CD4-positive, alpha-beta T cell (primary cell): ENCODE measurements at regions of chr11 and their contacts with region 1.

Region 1: DNA sequence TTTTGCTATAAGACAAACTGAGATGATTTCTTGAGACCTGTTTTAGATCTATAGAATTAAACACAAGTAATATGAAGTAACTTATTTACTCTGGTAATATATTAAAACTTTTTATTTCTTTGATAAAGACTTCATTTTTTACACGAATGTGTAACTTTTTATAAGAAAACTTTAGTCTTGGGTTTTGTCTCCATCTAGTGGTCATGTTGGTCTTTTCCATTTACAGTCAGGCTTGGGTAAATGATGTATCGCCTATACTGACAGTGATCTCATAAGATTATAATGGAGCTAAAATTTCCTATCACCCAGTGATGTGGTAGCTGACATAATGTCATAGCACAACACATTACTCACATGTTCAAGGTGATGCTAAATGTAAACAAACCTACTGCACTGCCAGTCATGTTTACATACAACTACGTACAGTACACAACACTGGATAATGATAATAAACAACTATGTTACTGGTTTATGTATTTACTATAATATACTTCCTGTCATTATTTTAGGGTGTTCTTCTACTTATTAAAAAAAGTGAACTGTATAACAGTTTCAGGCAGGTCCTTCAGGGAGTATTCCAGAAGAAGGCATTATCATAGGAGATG is 7.5 kb upstream of the C11orf97 start:
- DNase-seq: peak in 3 of 14 experiments; percentile 58 to 75 (median 72)
- ATAC-seq: peak; percentile 43
- H3K4me3 ChIP-seq: no peak overlapping the region
- H3K4me3 Mint-ChIP-seq: no peak overlapping the region
- H3K27ac ChIP-seq: no peak overlapping the region
- H3K27ac Mint-ChIP-seq: no peak overlapping the region
- H3K4me1 ChIP-seq: no peaks in the 10 kb centered on the region
- H3K4me1 Mint-ChIP-seq: no peaks in the 10 kb centered on the region
- H3K27me3 ChIP-seq: no peaks in the 10 kb centered on the region
- H3K27me3 Mint-ChIP-seq: peaks cover 11% of the 10 kb centered on the region
- CTCF ChIP-seq: peak; percentile 85

Region 2: GRCh38 chr11:92941676-92942571 is 1562.9 kb before region 1 on chr11:
- CTCF ChIA-PET with region 1: no interaction called
- POLR2A ChIA-PET with region 1: no interaction called
- intact Hi-C with region 1: loop called (anchors 10 kb)
- DNase-seq: peak in 3 of 14 experiments; percentile 17 to 45 (median 21)
- ATAC-seq: no peak
- H3K4me3 ChIP-seq: no peak overlapping the region
- H3K4me3 Mint-ChIP-seq: no peak overlapping the region
- H3K27ac ChIP-seq: no peak overlapping the region
- H3K27ac Mint-ChIP-seq: no peak overlapping the region
- H3K4me1 ChIP-seq: no peaks in the 10 kb centered on the region
- H3K4me1 Mint-ChIP-seq: no peaks in the 10 kb centered on the region
- H3K27me3 ChIP-seq: peaks cover 3% of the 10 kb centered on the region in 2 experiments
- H3K27me3 Mint-ChIP-seq: peaks cover 29% of the 10 kb centered on the region
- CTCF ChIP-seq: peak; percentile 53

Region 3: GRCh38 chr11:93234602-93235207 is 1270.1 kb before region 1 on chr11:
- CTCF ChIA-PET with region 1: no interaction called
- POLR2A ChIA-PET with region 1: no interaction called
- intact Hi-C with region 1: loop called (anchors 2 to 5 kb)
- DNase-seq: peak; percentile 44 to 79 (median 60)
- ATAC-seq: peak; percentile 100
- H3K4me3 ChIP-seq: no peak overlapping the region
- H3K4me3 Mint-ChIP-seq: no peak overlapping the region
- H3K27ac ChIP-seq: no peak overlapping the region
- H3K27ac Mint-ChIP-seq: no peak overlapping the region
- H3K4me1 ChIP-seq: no peaks in the 10 kb centered on the region
- H3K4me1 Mint-ChIP-seq: no peaks in the 10 kb centered on the region
- H3K27me3 ChIP-seq: peaks cover 0 to 16% of the 10 kb centered on the region in 2 experiments
- H3K27me3 Mint-ChIP-seq: peaks cover 41% of the 10 kb centered on the region
- CTCF ChIP-seq: peak; percentile 80

Region 4: GRCh38 chr11:93895106-93895862 is 609.5 kb before region 1 on chr11:
- CTCF ChIA-PET with region 1: interaction called, 4 read pairs
- POLR2A ChIA-PET with region 1: no interaction called
- intact Hi-C with region 1: loop called in 1 of 2 experiments (anchors 1 kb)
- DNase-seq: peak in 5 of 14 experiments; percentile 7 to 53 (median 35)
- ATAC-seq: peak; percentile 49
- H3K4me3 ChIP-seq: no peak overlapping the region
- H3K4me3 Mint-ChIP-seq: no peak overlapping the region
- H3K27ac ChIP-seq: no peak overlapping the region
- H3K27ac Mint-ChIP-seq: no peak overlapping the region
- H3K4me1 ChIP-seq: no peaks in the 10 kb centered on the region
- H3K4me1 Mint-ChIP-seq: no peaks in the 10 kb centered on the region
- H3K27me3 ChIP-seq: peaks cover 11 to 22% of the 10 kb centered on the region in 2 experiments
- H3K27me3 Mint-ChIP-seq: peaks cover 68% of the 10 kb centered on the region
- CTCF ChIP-seq: peak; percentile 48

Region 5: GRCh38 chr11:94171693-94172440 is 332.9 kb before region 1 on chr11:
- CTCF ChIA-PET with region 1: no interaction called
- POLR2A ChIA-PET with region 1: no interaction called
- intact Hi-C with region 1: loop called in 1 of 2 experiments (anchors 5 kb)
- DNase-seq: peak in 7 of 14 experiments; percentile 6 to 53 (median 30)
- ATAC-seq: no peak
- H3K4me3 ChIP-seq: no peak overlapping the region
- H3K4me3 Mint-ChIP-seq: no peak overlapping the region
- H3K27ac ChIP-seq: no peak overlapping the region
- H3K27ac Mint-ChIP-seq: no peak overlapping the region
- H3K4me1 ChIP-seq: no peaks in the 10 kb centered on the region
- H3K4me1 Mint-ChIP-seq: peaks cover 20% of the 10 kb centered on the region
- H3K27me3 ChIP-seq: no peaks in the 10 kb centered on the region
- H3K27me3 Mint-ChIP-seq: no peaks in the 10 kb centered on the region
- CTCF ChIP-seq: peak; percentile 35

Region 6: DNA sequence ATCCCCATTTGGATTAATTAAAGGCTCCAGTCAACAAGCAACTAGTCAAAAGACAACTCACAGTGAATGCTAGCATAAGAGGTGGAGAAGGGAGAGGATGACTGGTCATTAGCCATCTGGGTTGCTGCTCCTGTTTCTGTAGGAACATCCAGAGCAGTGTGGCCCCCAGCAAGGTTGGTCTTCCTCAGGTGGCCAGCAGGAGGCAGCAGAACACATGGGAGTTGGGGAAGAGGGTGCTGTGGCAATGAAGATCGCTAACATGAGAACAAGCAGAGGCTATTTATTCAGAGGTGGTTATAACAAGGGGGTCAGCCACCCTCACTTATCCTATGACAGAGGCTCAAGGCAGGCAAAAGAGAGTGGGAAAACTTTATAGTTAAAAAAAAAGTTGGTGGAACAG is 179.1 kb before region 1 on chr11:
- CTCF ChIA-PET with region 1: no interaction called
- POLR2A ChIA-PET with region 1: no interaction called
- intact Hi-C with region 1: loop called in 1 of 2 experiments (anchors 10 kb)
- DNase-seq: peak in 10 of 14 experiments; percentile 1 to 53 (median 28)
- ATAC-seq: no peak
- H3K4me3 ChIP-seq: no peak overlapping the region
- H3K4me3 Mint-ChIP-seq: no peak overlapping the region
- H3K27ac ChIP-seq: no peak overlapping the region
- H3K27ac Mint-ChIP-seq: no peak overlapping the region
- H3K4me1 ChIP-seq: no peaks in the 10 kb centered on the region
- H3K4me1 Mint-ChIP-seq: no peaks in the 10 kb centered on the region
- H3K27me3 ChIP-seq: no peaks in the 10 kb centered on the region
- H3K27me3 Mint-ChIP-seq: peaks cover under 1% of the 10 kb centered on the region
- CTCF ChIP-seq: peak; percentile 20

Region 7: GRCh38 chr11:94433049-94433448 is 71.7 kb before region 1 on chr11:
- CTCF ChIA-PET with region 1: no interaction called
- POLR2A ChIA-PET with region 1: no interaction called
- intact Hi-C with region 1: no loop called
- DNase-seq: no peak
- ATAC-seq: no peak
- H3K4me3 ChIP-seq: no peak overlapping the region
- H3K4me3 Mint-ChIP-seq: no peak overlapping the region
- H3K27ac ChIP-seq: no peak overlapping the region
- H3K27ac Mint-ChIP-seq: no peak overlapping the region
- H3K4me1 ChIP-seq: no peaks in the 10 kb centered on the region
- H3K4me1 Mint-ChIP-seq: no peaks in the 10 kb centered on the region
- H3K27me3 ChIP-seq: no peaks in the 10 kb centered on the region
- H3K27me3 Mint-ChIP-seq: no peaks in the 10 kb centered on the region
- CTCF ChIP-seq: no peak